ENCODE measurements at regions of chr19 and their contacts with region 1.

Region 1: DNA sequence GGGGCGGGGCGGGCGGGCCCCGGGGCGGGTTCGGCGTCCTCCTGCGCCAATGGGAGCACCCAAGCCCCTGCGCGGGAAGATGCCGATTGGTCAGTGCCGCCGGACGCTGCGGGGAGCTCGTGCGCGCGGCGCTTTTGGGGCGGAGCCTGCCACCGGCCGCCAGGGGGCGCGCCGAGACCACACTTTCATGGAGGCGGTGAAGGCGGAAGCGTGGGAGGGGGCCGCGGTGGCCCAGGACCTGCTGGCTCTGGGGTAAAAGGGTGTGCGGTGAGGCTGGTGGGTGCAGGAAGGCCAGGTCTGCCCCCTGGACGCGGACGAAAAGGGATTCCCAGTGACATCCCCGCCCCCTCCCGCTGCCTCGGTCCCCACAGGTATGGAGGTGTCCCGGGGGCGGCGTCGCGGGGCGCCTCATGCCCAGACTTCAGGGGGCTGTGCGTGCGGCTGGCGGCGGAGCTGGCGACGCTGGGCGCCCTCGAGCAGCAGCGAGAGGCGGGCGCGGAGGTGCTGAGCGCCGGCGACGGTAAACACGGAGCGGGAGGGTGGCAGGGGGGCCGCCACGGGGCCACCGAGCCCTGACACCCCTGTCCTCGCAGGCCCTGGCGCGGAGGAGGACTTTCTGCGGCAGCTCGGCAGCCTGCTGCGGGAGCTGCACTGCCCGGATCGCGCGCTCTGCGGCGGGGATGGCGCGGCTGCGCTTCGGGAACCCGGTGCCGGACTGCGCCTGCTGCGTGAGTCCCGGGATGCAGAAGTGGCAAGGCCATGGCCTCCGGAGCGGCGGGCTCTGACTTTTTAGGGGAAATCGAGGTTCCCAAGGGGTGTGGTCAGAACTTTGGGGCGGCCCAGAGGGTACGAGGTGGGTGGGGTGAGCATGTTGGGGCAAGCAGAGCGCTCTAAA is at the start of gene FAM98C:
- DNase-seq: peak; percentile 97 to 99 (median 99)
- ATAC-seq: peak; percentile 98
- H3K4me3 ChIP-seq: peak within 1 kb of the TSS; percentile 79
- H3K4me3 Mint-ChIP-seq: peak within 1 kb of the TSS; percentile 79 to 98 (median 90)
- H3K27ac ChIP-seq: peak within 1 kb of the TSS; percentile 83
- H3K27ac Mint-ChIP-seq: peak within 1 kb of the TSS; percentile 79 to 97 (median 95)
- H3K4me1 ChIP-seq: peaks cover 5 to 8% of the 10 kb centered on the region in 2 donors
- H3K4me1 Mint-ChIP-seq: peaks cover 7 to 21% (median 19%) of the 10 kb centered on the region in 7 donors
- H3K27me3 ChIP-seq: no peaks in the 10 kb centered on the region
- H3K27me3 Mint-ChIP-seq: peaks cover 0 to 10% (median 0%) of the 10 kb centered on the region in 5 donors
- total RNA-seq, gene FAM98C: 33.8 to 56.5 (median 44.7) TPM

Region 2: GRCh38 chr19:38245826-38246498 is 157.3 kb before region 1 on chr19:
- CTCF ChIA-PET with region 1: interaction called, 3 read pairs
- POLR2A ChIA-PET with region 1: no interaction called
- intact Hi-C with region 1: loop called in 1 of 2 experiments (anchors 1 kb)
- DNase-seq: no peak
- ATAC-seq: no peak
- H3K4me3 ChIP-seq: no peak overlapping the region
- H3K4me3 Mint-ChIP-seq: no peak overlapping the region
- H3K27ac ChIP-seq: no peak overlapping the region
- H3K27ac Mint-ChIP-seq: peak overlapping the region in 1 of 9 donors; percentile 33
- H3K4me1 ChIP-seq: peaks cover 0 to 3% of the 10 kb centered on the region in 2 donors
- H3K4me1 Mint-ChIP-seq: peaks cover 4 to 14% (median 5%) of the 10 kb centered on the region in 7 donors
- H3K27me3 ChIP-seq: no peaks in the 10 kb centered on the region
- H3K27me3 Mint-ChIP-seq: peaks cover 0 to 5% (median 0%) of the 10 kb centered on the region in 5 donors

Region 3: GRCh38 chr19:38351865-38352395 is 51.3 kb before region 1 on chr19:
- CTCF ChIA-PET with region 1: no interaction called
- POLR2A ChIA-PET with region 1: no interaction called
- intact Hi-C with region 1: no loop called
- DNase-seq: no peak
- ATAC-seq: no peak
- H3K4me3 ChIP-seq: no peak overlapping the region
- H3K4me3 Mint-ChIP-seq: no peak overlapping the region
- H3K27ac ChIP-seq: no peak overlapping the region
- H3K27ac Mint-ChIP-seq: no peak overlapping the region
- H3K4me1 ChIP-seq: no peaks in the 10 kb centered on the region
- H3K4me1 Mint-ChIP-seq: peaks cover 0 to 3% (median 0%) of the 10 kb centered on the region in 7 donors
- H3K27me3 ChIP-seq: no peaks in the 10 kb centered on the region
- H3K27me3 Mint-ChIP-seq: peaks cover 0 to 9% (median 0%) of the 10 kb centered on the region in 5 donors

Region 4: DNA sequence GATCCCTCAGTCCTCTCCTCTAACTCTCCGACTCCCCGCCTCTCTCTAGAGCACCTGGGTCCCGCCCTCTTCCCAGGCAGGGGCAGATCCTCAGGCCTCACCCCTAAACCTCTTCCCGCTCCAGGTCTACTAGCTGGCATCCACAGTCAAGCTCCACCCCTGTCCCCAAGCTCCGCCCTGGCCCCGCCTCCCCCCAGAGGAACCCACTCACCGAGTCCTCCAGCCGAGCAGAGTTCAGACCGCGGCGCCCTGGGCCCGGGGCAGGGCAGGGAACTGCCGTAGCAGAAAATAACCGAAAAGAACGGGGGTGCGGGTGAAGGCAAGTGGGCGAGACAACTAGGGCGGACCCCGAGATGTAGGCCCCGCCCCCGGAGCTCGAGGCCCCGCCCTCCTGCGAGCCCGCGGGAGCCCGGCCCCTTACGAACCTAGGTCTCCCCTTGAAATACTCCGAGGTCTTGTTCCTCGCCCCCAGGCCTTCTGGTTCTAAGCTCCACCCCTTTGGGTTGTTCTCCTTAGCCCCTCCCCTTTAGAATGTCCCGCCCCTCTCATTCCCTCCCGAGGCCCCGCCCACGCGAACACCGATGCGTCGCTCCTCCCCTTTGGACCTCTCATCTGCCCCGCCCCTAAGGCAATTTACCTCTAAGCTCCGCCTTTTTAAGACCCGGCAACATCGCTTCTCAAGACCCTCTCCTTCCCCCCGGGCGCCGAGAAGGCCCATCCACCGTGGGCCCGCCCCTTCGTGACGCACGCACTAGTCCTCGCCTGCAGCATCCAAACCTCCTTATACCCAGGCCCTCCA is 15.5 kb before region 1 on chr19 and contains the start of gene GGN:
- CTCF ChIA-PET with region 1: interaction called, 9 read pairs
- POLR2A ChIA-PET with region 1: interaction called, 28 read pairs
- intact Hi-C with region 1: loop called (anchors 1 kb)
- DNase-seq: peak; percentile 60 to 83 (median 72)
- ATAC-seq: peak; percentile 83
- H3K4me3 ChIP-seq: peak within 1 kb of the TSS; percentile 74
- H3K4me3 Mint-ChIP-seq: peak within 1 kb of the TSS; percentile 81 to 95 (median 91)
- H3K27ac ChIP-seq: no peak within 1 kb of the TSS
- H3K27ac Mint-ChIP-seq: peak within 1 kb of the TSS in 8 of 9 donors; percentile 43 to 95 (median 84)
- H3K4me1 ChIP-seq: peaks cover 13 to 34% of the 10 kb centered on the region in 2 donors
- H3K4me1 Mint-ChIP-seq: peaks cover 5 to 26% (median 21%) of the 10 kb centered on the region in 7 donors
- H3K27me3 ChIP-seq: no peaks in the 10 kb centered on the region
- H3K27me3 Mint-ChIP-seq: peaks cover 6 to 41% (median 30%) of the 10 kb centered on the region in 5 donors
- total RNA-seq, gene GGN: 0.29 to 0.60 (median 0.39) TPM in 3 of 5 experiments, not detected in the others

Region 5: GRCh38 chr19:38514812-38515633 is 111.8 kb after region 1 on chr19:
- CTCF ChIA-PET with region 1: interaction called, 6 read pairs
- POLR2A ChIA-PET with region 1: interaction called, 4 read pairs
- intact Hi-C with region 1: loop called (anchors 1 kb)
- DNase-seq: peak; percentile 47 to 84 (median 74)
- ATAC-seq: peak; percentile 95
- H3K4me3 ChIP-seq: no peak overlapping the region
- H3K4me3 Mint-ChIP-seq: peak overlapping the region in 2 of 10 donors; percentile 16 to 45
- H3K27ac ChIP-seq: no peak overlapping the region
- H3K27ac Mint-ChIP-seq: peak overlapping the region in 3 of 9 donors; percentile 14 to 64 (median 60)
- H3K4me1 ChIP-seq: peaks cover 0 to 10% of the 10 kb centered on the region in 2 donors
- H3K4me1 Mint-ChIP-seq: peaks cover 6 to 30% (median 9%) of the 10 kb centered on the region in 7 donors
- H3K27me3 ChIP-seq: no peaks in the 10 kb centered on the region
- H3K27me3 Mint-ChIP-seq: peaks cover 0 to 4% (median 4%) of the 10 kb centered on the region in 5 donors

Region 6: DNA sequence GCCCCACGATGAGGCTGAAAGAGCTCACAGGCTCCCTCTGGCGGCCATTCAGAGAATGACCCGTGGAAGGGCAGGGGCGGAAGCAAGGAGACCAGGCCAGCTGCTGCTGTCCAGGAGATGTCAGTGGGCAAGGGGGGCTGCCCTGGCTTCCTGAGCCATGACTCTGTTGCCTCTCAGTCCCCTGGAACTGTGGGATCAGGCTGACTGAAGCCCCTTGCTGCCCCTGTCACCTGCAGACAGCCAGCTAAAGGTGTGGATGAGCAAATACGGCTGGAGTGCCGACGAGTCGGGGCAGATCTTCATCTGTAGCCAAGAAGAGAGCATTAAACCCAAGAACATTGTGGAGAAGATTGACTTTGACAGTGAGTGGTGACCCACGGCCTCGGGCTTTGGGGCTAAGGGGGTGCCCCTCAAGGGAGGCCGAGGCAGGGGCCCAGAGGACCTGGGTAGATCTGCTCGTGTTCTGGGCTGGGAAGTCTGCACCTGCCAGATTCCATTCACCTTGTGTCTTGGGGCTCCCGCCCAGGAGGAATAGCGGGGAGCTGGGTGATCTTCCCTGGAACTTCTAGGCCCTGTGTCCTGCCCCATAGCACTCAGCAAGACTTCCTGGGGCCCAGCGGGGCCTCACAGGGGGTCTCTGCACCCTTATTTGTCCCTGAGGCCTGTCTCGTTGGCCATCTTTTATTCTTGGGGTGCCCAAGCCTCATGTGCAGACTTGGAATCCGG is 231.7 kb after region 1 on chr19:
- CTCF ChIA-PET with region 1: interaction called, 4 read pairs
- POLR2A ChIA-PET with region 1: interaction called, 17 read pairs
- intact Hi-C with region 1: loop called (anchors 1 to 2 kb)
- DNase-seq: peak; percentile 42 to 79 (median 58)
- ATAC-seq: peak; percentile 64
- H3K4me3 ChIP-seq: no peak overlapping the region
- H3K4me3 Mint-ChIP-seq: peak overlapping the region in 9 of 10 donors; percentile 21 to 65 (median 47)
- H3K27ac ChIP-seq: no peak overlapping the region
- H3K27ac Mint-ChIP-seq: peak overlapping the region; percentile 2 to 81 (median 69)
- H3K4me1 ChIP-seq: peaks cover 23 to 24% of the 10 kb centered on the region in 2 donors
- H3K4me1 Mint-ChIP-seq: peaks cover 14 to 40% (median 35%) of the 10 kb centered on the region in 7 donors
- H3K27me3 ChIP-seq: no peaks in the 10 kb centered on the region
- H3K27me3 Mint-ChIP-seq: no peaks in the 10 kb centered on the region

Region 7: GRCh38 chr19:38849860-38850435 is 446.7 kb after region 1 on chr19 and contains the start of gene HNRNPL:
- CTCF ChIA-PET with region 1: no interaction called
- POLR2A ChIA-PET with region 1: no interaction called
- intact Hi-C with region 1: loop called in 1 of 2 experiments (anchors 2 kb)
- DNase-seq: peak; percentile 99 to 100 (median 100)
- ATAC-seq: peak; percentile 78
- H3K4me3 ChIP-seq: peak within 1 kb of the TSS; percentile 81
- H3K4me3 Mint-ChIP-seq: peak within 1 kb of the TSS; percentile 88 to 99 (median 96)
- H3K27ac ChIP-seq: peak within 1 kb of the TSS; percentile 96
- H3K27ac Mint-ChIP-seq: peak within 1 kb of the TSS; percentile 94 to 100 (median 99)
- H3K4me1 ChIP-seq: peaks cover 24 to 41% of the 10 kb centered on the region in 2 donors
- H3K4me1 Mint-ChIP-seq: peaks cover 30 to 67% (median 50%) of the 10 kb centered on the region in 7 donors
- H3K27me3 ChIP-seq: no peaks in the 10 kb centered on the region
- H3K27me3 Mint-ChIP-seq: peaks cover 0 to 5% (median 0%) of the 10 kb centered on the region in 5 donors
- total RNA-seq, gene HNRNPL: 339 to 539 (median 505) TPM

Region 8: GRCh38 chr19:38949580-38950367 is 546.6 kb after region 1 on chr19:
- CTCF ChIA-PET with region 1: interaction called, 4 read pairs
- POLR2A ChIA-PET with region 1: no interaction called
- intact Hi-C with region 1: loop called (anchors 1 kb)
- DNase-seq: peak; percentile 49 to 88 (median 70)
- ATAC-seq: peak; percentile 98
- H3K4me3 ChIP-seq: peak overlapping the region; percentile 39
- H3K4me3 Mint-ChIP-seq: peak overlapping the region; percentile 52 to 82 (median 72)
- H3K27ac ChIP-seq: no peak overlapping the region
- H3K27ac Mint-ChIP-seq: peak overlapping the region in 3 of 9 donors; percentile 20 to 64 (median 61)
- H3K4me1 ChIP-seq: peaks cover 0 to 4% of the 10 kb centered on the region in 2 donors
- H3K4me1 Mint-ChIP-seq: peaks cover 10 to 18% (median 16%) of the 10 kb centered on the region in 7 donors
- H3K27me3 ChIP-seq: no peaks in the 10 kb centered on the region
- H3K27me3 Mint-ChIP-seq: peaks cover 14 to 29% (median 15%) of the 10 kb centered on the region in 5 donors